CD14-positive monocyte (primary cell): ENCODE measurements at regions of chr4 and their contacts with region 1.

Region 1: DNA sequence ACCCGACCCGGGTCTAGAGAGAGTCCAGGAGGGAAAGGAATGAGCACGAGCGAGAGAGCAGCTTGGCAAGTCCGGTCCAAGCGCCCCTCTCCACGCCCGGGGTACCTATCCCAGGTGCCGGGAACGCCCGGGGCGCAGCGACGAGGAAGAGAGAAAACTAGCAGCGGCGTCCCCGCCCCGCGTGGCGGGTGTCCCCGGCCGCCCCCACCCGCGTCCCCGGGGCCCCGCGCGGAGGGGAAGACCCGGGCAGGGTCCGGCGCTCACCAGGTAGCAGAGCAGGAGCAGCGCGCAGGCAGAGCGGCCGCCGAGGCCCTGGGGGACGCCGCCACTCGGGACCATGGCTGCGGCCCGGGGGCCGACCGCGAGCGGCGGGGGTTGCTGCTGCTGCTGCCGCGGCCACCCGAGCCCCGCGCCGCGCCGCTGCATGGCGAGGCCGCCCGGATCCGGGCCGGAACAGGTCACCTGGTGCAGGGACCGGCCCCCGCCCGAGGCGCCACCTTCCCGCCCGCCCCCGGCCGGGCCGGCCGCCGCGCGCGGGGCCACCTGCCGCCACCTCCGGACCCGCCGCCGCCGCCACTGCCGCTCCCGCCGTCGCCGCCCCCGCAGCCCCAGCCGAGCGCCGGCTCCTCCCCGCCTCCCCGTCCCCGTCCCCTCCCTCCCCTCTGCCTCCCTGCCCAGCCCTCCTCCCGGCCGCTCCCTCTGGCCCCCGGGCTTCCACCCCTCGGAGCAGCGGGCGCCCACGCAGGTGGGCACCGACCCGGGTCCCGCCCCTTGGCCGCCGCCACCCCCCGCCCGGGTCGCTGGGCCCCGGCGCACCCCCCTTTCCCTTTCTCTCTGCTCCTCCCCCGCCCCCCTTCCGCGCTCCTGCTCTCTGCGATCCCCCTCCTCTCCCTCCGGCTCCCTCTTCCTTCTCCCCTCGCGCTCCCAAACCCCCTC is at the start of gene SEL1L3:
- DNase-seq: no peak
- H3K4me3 ChIP-seq: peak within 1 kb of the TSS; percentile 43 to 78 (median 54)
- H3K4me3 Mint-ChIP-seq: peak within 1 kb of the TSS; percentile 99 to 100
- H3K27ac ChIP-seq: peak within 1 kb of the TSS in 1 of 2 donors; percentile 80
- H3K27ac Mint-ChIP-seq: peak within 1 kb of the TSS; percentile 63 to 98 (median 92)
- H3K4me1 ChIP-seq: peaks cover 34 to 46% of the 10 kb centered on the region in 2 donors
- H3K4me1 Mint-ChIP-seq: peaks cover 44% of the 10 kb centered on the region
- H3K27me3 ChIP-seq: peaks cover 0 to 14% of the 10 kb centered on the region in 2 donors
- H3K27me3 Mint-ChIP-seq: peaks cover 14 to 23% (median 22%) of the 10 kb centered on the region in 3 donors
- CTCF ChIP-seq: no peak
- polyA plus RNA-seq, gene SEL1L3: 0.61 to 2.2 (median 1.7) TPM

Region 2: GRCh38 chr4:25913851-25914669 is 51.4 kb after region 1 on chr4 and contains the start of gene SMIM20:
- intact Hi-C with region 1: loop called (anchors 5 kb)
- DNase-seq: peak; percentile 79 to 89 (median 86)
- H3K4me3 ChIP-seq: peak within 1 kb of the TSS; percentile 74 to 91 (median 74)
- H3K4me3 Mint-ChIP-seq: peak within 1 kb of the TSS; percentile 97
- H3K27ac ChIP-seq: peak within 1 kb of the TSS; percentile 86 to 92
- H3K27ac Mint-ChIP-seq: peak within 1 kb of the TSS; percentile 94 to 98 (median 97)
- H3K4me1 ChIP-seq: peaks cover 18% of the 10 kb centered on the region in 2 donors
- H3K4me1 Mint-ChIP-seq: peaks cover 25% of the 10 kb centered on the region
- H3K27me3 ChIP-seq: no peaks in the 10 kb centered on the region
- H3K27me3 Mint-ChIP-seq: peaks cover 3 to 6% (median 4%) of the 10 kb centered on the region in 3 donors
- CTCF ChIP-seq: no peak
- polyA plus RNA-seq, gene SMIM20: 10.4 to 38.1 (median 33.7) TPM

Region 3: DNA sequence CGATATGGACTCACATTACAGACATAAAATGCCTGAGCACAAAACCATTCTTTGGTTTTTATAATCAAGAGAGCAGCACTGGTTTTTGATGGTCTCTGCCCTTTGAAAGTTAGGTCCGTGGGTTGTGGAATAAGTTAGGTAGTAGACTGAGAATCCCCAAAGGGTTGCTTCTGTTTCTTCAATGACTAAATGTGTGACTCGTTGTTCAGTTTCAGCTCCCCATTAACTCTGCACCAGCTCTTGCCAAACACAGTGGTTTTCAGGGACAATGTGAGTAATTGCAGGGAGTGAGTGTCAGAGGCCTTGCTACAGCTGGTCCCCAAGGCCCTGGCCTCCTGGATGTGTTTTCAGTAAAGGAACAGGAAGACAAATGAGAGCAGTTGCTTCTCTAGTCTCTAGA is 76.1 kb after region 1 on chr4:
- intact Hi-C with region 1: no loop called
- DNase-seq: peak; percentile 3 to 63 (median 15)
- H3K4me3 ChIP-seq: no peak overlapping the region
- H3K4me3 Mint-ChIP-seq: no peak overlapping the region
- H3K27ac ChIP-seq: no peak overlapping the region
- H3K27ac Mint-ChIP-seq: peak overlapping the region in 1 of 7 donors; percentile 8
- H3K4me1 ChIP-seq: no peaks in the 10 kb centered on the region
- H3K4me1 Mint-ChIP-seq: peaks cover 11% of the 10 kb centered on the region
- H3K27me3 ChIP-seq: no peaks in the 10 kb centered on the region
- H3K27me3 Mint-ChIP-seq: peaks cover 8 to 16% (median 8%) of the 10 kb centered on the region in 3 donors
- CTCF ChIP-seq: no peak

Region 4: DNA sequence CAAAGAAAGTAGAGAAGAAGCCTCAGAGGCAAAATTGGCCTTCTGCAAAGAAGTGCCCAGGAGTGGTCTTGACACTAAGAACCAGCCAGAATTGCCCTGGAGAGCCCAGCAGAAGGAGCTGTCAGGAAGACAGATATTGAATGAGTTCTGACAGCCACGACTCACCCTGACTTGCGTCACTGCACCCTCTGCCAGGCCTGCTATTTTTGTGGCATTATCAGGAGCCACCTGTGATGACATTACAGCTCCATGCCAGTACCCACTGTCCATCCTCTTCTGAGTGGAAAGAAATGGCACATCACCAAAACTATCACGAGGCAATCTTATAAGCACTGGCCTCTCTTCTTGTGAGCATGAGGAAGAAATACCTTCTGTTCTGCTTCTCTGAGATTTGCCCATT is 119.1 kb after region 1 on chr4:
- intact Hi-C with region 1: no loop called
- DNase-seq: no peak
- H3K4me3 ChIP-seq: no peak overlapping the region
- H3K4me3 Mint-ChIP-seq: no peak overlapping the region
- H3K27ac ChIP-seq: no peak overlapping the region
- H3K27ac Mint-ChIP-seq: no peak overlapping the region
- H3K4me1 ChIP-seq: no peaks in the 10 kb centered on the region
- H3K4me1 Mint-ChIP-seq: peaks cover 6% of the 10 kb centered on the region
- H3K27me3 ChIP-seq: no peaks in the 10 kb centered on the region
- H3K27me3 Mint-ChIP-seq: peaks cover 2 to 5% (median 3%) of the 10 kb centered on the region in 3 donors
- CTCF ChIP-seq: no peak

Region 5: GRCh38 chr4:26076000-26076587 is 213.4 kb after region 1 on chr4:
- intact Hi-C with region 1: loop called in 1 of 2 experiments (anchors 5 kb)
- DNase-seq: peak; percentile 92 to 97 (median 95)
- H3K4me3 ChIP-seq: peak overlapping the region in 1 of 3 experiments; percentile 15
- H3K4me3 Mint-ChIP-seq: peak overlapping the region; percentile 6 to 56
- H3K27ac ChIP-seq: peak overlapping the region; percentile 71 to 95
- H3K27ac Mint-ChIP-seq: peak overlapping the region; percentile 98 to 99 (median 98)
- H3K4me1 ChIP-seq: peaks cover 56% of the 10 kb centered on the region in 2 donors
- H3K4me1 Mint-ChIP-seq: peaks cover 65% of the 10 kb centered on the region
- H3K27me3 ChIP-seq: peaks cover 0 to 6% of the 10 kb centered on the region in 2 donors
- H3K27me3 Mint-ChIP-seq: peaks cover 5 to 22% (median 7%) of the 10 kb centered on the region in 3 donors
- CTCF ChIP-seq: no peak